ENCODE measurements at regions of chr1 and their contacts with region 1.

Region 1: DNA sequence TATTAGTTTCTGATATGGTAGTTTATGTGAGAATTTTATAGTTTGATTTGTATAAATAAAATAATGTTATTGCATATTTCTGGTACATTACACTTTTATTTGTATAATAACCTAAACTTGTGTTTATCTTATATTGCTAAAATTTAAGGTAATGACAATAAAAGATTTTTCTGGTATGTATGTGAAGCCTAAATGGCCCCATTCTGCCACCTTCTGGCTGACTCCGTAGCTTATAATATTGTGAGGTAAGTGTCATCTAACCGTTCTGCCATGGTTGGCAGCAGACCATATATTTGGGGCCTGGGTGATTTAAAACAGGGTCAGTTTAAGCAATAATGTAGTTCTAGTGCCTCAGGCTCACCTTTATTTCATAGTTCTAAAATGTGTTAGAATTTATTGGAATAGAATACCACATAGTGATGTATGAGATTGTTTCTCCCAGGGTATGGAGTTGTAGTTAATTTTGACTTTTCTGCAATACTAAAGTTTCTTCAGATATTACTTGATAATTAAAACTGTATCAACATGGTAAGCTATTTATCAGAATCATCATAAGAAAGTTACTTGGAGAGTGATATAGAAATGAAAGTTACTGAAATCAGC is 21.2 kb upstream of the PRKACB start:
- DNase-seq: peak; percentile 73
- ATAC-seq: peak; percentile 42
- H3K4me3 Mint-ChIP-seq: no peak overlapping the region
- H3K27ac Mint-ChIP-seq: no peak overlapping the region
- H3K4me1 Mint-ChIP-seq: no peaks in the 10 kb centered on the region
- H3K27me3 Mint-ChIP-seq: no peaks in the 10 kb centered on the region

Region 2: DNA sequence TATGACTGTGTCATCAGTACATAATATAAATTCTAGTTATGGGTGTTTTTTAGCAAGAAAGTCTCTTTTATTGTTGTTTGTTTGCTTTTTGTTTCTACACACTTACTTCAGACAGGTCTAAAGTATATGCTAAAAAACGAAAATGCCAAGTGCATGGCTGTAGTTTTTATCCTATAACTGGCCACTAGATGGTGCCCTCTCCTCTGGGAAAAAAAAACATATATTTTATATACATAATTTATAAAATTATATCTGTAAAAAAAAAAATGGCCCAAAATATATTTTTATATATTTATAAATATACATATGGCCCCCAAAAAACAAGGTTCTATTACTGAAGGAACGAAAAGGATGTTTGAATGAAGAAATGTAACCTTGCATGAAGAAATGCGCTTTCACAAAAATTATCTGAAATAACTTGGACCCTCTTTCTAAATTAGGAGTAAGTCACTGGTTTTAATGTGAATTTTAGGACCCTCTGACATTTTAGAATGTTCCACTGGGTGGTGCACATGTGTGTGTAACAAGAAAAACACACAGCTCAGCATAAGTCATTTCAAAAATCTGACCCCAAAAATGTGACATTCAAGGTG is 217.5 kb before region 1 on chr1:
- CTCF ChIA-PET with region 1: interaction called, 11 read pairs
- POLR2A ChIA-PET with region 1: no interaction called
- intact Hi-C with region 1: loop called (anchors 1 kb)
- DNase-seq: no peak
- ATAC-seq: no peak
- H3K4me3 Mint-ChIP-seq: no peak overlapping the region
- H3K27ac Mint-ChIP-seq: no peak overlapping the region
- H3K4me1 Mint-ChIP-seq: no peaks in the 10 kb centered on the region
- H3K27me3 Mint-ChIP-seq: peaks cover 8% of the 10 kb centered on the region

Region 3: DNA sequence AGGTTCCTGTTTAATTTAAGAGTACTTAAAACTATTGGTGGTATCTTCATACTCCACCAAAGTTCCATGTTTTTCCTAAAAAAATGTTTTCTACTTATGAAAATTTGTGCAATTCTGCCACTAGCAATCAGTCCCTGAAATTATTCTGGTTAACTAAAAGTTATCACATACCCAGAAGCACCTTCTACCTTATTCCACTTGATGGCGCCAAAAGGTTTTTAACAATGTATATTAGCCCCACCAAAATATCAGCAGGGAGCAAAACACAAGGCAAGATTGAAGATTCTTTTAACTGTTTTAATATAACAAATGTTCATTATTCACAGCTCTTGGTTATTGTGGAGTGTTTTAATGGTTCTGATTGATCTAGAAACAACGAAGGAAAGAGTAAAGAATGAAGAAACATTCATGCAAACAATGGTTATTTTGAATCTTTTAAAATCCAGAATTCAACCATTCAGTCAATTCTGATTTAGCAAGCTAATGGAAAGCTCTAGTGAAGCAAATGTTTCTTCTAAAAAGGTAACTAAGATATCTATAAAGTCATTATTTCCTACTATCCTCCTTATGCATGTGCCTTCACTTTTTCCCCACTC is 191.1 kb before region 1 on chr1:
- CTCF ChIA-PET with region 1: interaction called, 64 read pairs
- POLR2A ChIA-PET with region 1: no interaction called
- intact Hi-C with region 1: loop called (anchors 1 kb)
- DNase-seq: peak; percentile 11
- ATAC-seq: peak; percentile 58
- H3K4me3 Mint-ChIP-seq: no peak overlapping the region
- H3K27ac Mint-ChIP-seq: no peak overlapping the region
- H3K4me1 Mint-ChIP-seq: no peaks in the 10 kb centered on the region
- H3K27me3 Mint-ChIP-seq: no peaks in the 10 kb centered on the region

Region 4: DNA sequence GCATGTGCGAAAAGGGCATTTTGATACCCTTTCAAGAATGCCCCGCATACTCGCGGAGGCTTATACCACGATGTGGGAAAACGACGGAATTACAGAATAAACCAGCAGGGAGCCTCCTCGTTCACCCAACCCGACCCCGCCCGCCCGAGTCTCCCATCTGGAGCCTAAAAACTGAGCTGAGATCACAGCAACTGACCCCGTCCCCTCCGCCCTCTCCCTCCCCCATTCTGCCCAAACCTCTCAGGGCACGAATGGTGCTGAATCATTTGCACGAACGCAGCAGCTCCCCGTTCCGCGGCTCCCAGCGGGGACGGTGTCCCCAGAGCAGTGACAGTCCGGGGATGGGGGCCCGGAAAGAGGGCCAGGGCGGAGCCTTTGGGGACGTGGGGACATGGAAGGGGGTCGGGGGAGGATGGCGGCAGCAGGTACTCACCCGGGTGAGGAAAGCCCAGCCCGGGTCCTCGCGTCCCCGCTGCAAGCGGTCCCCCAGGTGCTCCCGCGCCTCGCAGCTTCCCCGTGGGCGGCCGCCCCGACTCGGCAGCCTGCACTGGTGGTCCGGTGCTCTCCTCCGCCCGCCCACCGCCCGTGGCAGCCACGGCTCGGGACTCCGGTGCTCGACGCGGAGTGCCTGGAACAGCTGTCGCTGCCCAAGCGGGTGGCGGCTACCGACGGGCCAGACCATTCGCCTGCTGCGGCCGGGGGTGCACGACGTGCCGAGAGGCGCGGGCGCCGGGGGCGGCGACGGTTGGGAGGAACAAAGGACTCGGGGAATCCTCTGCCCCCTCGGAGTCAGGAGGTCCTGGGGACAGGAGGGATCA is 124.2 kb before region 1 on chr1 and contains the start of gene TTLL7:
- CTCF ChIA-PET with region 1: no interaction called
- POLR2A ChIA-PET with region 1: no interaction called
- intact Hi-C with region 1: loop called in 1 of 2 experiments (anchors 5 kb)
- DNase-seq: peak; percentile 79
- ATAC-seq: peak; percentile 79
- H3K4me3 Mint-ChIP-seq: peak within 1 kb of the TSS; percentile 77
- H3K27ac Mint-ChIP-seq: peak within 1 kb of the TSS; percentile 49
- H3K4me1 Mint-ChIP-seq: peaks cover 12% of the 10 kb centered on the region
- H3K27me3 Mint-ChIP-seq: peaks cover 62% of the 10 kb centered on the region
- total RNA-seq, gene TTLL7: 1.4 to 2.6 TPM

Measured in activated CD4-positive, alpha-beta T cell treated with anti-CD3 and anti-CD28 coated beads for 36 hours (primary cell).